Mammary epithelial cell (primary cell): ENCODE measurements at regions of chr3 and their contacts with region 1.

Region 1: GRCh38 chr3:57974796-57975388 is 33.3 kb upstream of the FLNB start:
- DNase-seq: peak; percentile 91
- H3K4me3 ChIP-seq: no peak overlapping the region
- H3K27ac ChIP-seq: peak overlapping the region; percentile 87
- H3K4me1 ChIP-seq: peaks cover 81% of the 10 kb centered on the region
- H3K27me3 ChIP-seq: no peaks in the 10 kb centered on the region
- CTCF ChIP-seq: no peak

Region 2: GRCh38 chr3:57793737-57794187 is 181.1 kb before region 1 on chr3:
- CTCF ChIA-PET with region 1: no interaction called
- dilution Hi-C with region 1: no loop called
- in situ Hi-C with region 1: no loop called
- intact Hi-C with region 1: no loop called
- DNase-seq: peak; percentile 19
- H3K4me3 ChIP-seq: no peak overlapping the region
- H3K27ac ChIP-seq: no peak overlapping the region
- H3K4me1 ChIP-seq: peaks cover 12% of the 10 kb centered on the region
- H3K27me3 ChIP-seq: no peaks in the 10 kb centered on the region
- CTCF ChIP-seq: no peak

Region 3: DNA sequence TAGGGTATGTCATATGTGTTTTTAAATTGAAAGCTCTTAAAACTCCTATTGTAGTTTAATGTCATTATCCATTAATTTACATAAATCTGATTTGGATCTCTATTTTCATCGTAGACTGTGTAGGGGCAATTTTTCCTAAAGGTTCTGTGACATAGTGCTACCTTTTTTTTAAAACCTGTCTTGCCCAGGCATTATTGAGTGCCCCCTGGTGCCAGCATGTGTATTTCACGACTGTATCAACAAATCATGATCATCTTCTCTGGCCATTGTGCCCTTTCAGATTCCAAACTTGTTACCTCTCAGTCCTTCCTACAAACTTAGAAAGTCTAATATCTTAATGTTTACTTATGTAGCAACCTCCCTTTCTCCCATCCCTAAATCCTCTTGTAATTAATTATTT is 63.9 kb before region 1 on chr3:
- CTCF ChIA-PET with region 1: no interaction called
- dilution Hi-C with region 1: no loop called
- in situ Hi-C with region 1: no loop called
- intact Hi-C with region 1: no loop called
- DNase-seq: no peak
- H3K4me3 ChIP-seq: no peak overlapping the region
- H3K27ac ChIP-seq: no peak overlapping the region
- H3K4me1 ChIP-seq: no peaks in the 10 kb centered on the region
- H3K27me3 ChIP-seq: no peaks in the 10 kb centered on the region
- CTCF ChIP-seq: peak; percentile 39 to 48

Region 4: DNA sequence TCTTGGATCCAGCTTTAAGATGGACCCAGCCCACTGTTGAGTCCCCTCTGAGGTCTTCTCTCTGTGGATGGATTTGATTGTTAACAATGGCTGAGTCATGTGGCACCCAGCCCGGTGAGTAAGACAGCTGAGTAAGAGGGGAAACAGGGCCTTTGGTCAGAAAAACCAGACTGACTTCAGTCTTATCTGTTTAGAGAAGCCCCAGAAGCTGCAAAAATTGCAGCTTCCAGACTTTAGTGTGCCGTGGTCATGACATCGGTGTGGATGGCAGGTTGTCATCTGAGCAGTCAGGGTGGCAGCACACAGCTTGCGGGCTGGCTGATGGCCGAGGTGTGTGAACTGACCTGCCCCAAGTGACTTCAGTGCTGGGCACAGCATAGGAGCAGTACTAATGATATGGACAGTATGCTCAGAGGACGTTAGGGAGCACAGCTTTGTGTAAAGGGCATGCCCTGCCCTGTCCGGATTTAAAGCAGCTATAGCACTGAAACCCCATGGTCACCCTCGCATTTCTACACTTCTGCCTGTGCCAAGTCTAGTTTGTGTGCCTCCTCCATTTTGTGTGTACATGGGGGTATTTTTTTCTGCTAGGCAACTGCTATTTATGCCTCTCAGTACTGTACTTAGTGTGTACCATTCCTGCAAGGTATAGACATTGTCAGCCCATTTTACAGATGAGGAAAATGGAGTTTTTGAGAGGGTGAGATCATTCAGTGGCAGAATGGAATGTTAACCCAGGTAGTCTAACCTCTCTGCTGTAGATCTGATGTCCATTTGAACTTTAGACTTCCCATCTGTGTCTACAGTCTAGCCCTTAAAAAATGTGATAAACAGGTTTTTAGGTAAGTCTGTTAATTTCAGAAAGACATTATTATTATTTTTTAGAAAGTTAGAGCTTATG is 77.7 kb after region 1 on chr3:
- CTCF ChIA-PET with region 1: no interaction called
- dilution Hi-C with region 1: loop called (anchors 5 kb)
- in situ Hi-C with region 1: no loop called
- intact Hi-C with region 1: loop called (anchors 2 kb)
- DNase-seq: peak; percentile 94
- H3K4me3 ChIP-seq: peak overlapping the region in 1 of 3 experiments; percentile 25
- H3K27ac ChIP-seq: peak overlapping the region; percentile 89
- H3K4me1 ChIP-seq: peaks cover 77% of the 10 kb centered on the region
- H3K27me3 ChIP-seq: no peaks in the 10 kb centered on the region
- CTCF ChIP-seq: no peak

Region 5: GRCh38 chr3:58059349-58060321 is 84.7 kb after region 1 on chr3:
- CTCF ChIA-PET with region 1: no interaction called
- dilution Hi-C with region 1: loop called (anchors 5 kb)
- in situ Hi-C with region 1: no loop called
- intact Hi-C with region 1: no loop called
- DNase-seq: no peak
- H3K4me3 ChIP-seq: no peak overlapping the region
- H3K27ac ChIP-seq: no peak overlapping the region
- H3K4me1 ChIP-seq: peaks cover 43% of the 10 kb centered on the region
- H3K27me3 ChIP-seq: no peaks in the 10 kb centered on the region
- CTCF ChIP-seq: no peak